Natural killer cell (primary cell): ENCODE measurements at regions of chr6 and their contacts with region 1.

Region 1: GRCh38 chr6:17156112-17156921 is 54.5 kb downstream of the STMND1 start:
- DNase-seq: peak; percentile 46 to 83
- ATAC-seq: peak in 2 of 3 donors; percentile 44 to 67
- H3K4me3 ChIP-seq: no peak overlapping the region
- H3K4me3 Mint-ChIP-seq: no peak overlapping the region
- H3K27ac ChIP-seq: no peak overlapping the region
- H3K27ac Mint-ChIP-seq: no peak overlapping the region
- H3K4me1 ChIP-seq: no peaks in the 10 kb centered on the region
- H3K4me1 Mint-ChIP-seq: no peaks in the 10 kb centered on the region
- H3K27me3 ChIP-seq: no peaks in the 10 kb centered on the region
- H3K27me3 Mint-ChIP-seq: peaks cover 4 to 18% of the 10 kb centered on the region in 2 donors
- CTCF ChIP-seq: peak; percentile 87

Region 2: DNA sequence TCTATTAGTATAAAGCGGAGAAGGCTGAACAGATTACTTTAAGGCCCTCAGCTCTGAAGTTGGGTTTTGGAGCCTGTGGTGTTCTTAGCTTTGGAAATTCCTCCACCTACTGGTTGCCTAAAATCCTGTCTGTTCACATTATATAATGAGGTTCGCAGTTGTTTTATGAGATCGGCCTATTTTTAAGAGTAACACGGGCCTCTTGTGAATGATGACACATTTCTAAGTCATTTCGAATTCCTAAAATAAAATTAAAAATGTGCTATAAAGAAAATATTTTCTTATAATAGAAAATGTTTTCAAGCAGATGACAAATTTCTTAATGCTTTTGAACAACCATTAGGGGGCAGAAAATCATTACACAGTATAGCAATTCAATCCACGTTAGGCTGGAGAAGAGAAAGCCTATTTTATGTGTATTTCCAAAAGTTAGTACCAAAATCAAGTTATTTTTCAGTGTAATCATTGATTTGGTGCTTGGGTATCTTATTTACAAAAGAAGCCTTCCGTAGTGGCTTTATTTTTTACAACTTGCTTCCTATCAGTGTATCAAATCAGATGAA is 428.0 kb after region 1 on chr6:
- intact Hi-C with region 1: loop called (anchors 2 kb)
- DNase-seq: peak in 1 of 2 donors; percentile 70
- ATAC-seq: peak; percentile 53 to 64 (median 58)
- H3K4me3 ChIP-seq: no peak overlapping the region
- H3K4me3 Mint-ChIP-seq: no peak overlapping the region
- H3K27ac ChIP-seq: no peak overlapping the region
- H3K27ac Mint-ChIP-seq: peak overlapping the region in 1 of 2 donors; percentile 14
- H3K4me1 ChIP-seq: peaks cover 15% of the 10 kb centered on the region
- H3K4me1 Mint-ChIP-seq: peaks cover 18 to 30% of the 10 kb centered on the region in 2 donors
- H3K27me3 ChIP-seq: peaks cover 2% of the 10 kb centered on the region
- H3K27me3 Mint-ChIP-seq: peaks cover 3 to 6% of the 10 kb centered on the region in 2 donors
- CTCF ChIP-seq: peak; percentile 80

Region 3: GRCh38 chr6:17803409-17803808 is 647.1 kb after region 1 on chr6:
- intact Hi-C with region 1: loop called (anchors 5 kb)
- DNase-seq: no peak
- ATAC-seq: no peak
- H3K4me3 ChIP-seq: no peak overlapping the region
- H3K4me3 Mint-ChIP-seq: no peak overlapping the region
- H3K27ac ChIP-seq: no peak overlapping the region
- H3K27ac Mint-ChIP-seq: no peak overlapping the region
- H3K4me1 ChIP-seq: no peaks in the 10 kb centered on the region
- H3K4me1 Mint-ChIP-seq: peaks cover 4 to 6% of the 10 kb centered on the region in 2 donors
- H3K27me3 ChIP-seq: no peaks in the 10 kb centered on the region
- H3K27me3 Mint-ChIP-seq: no peaks in the 10 kb centered on the region
- CTCF ChIP-seq: no peak

Region 4: GRCh38 chr6:17816921-17817611 is 660.7 kb after region 1 on chr6:
- intact Hi-C with region 1: loop called (anchors 5 kb)
- DNase-seq: no peak
- ATAC-seq: no peak
- H3K4me3 ChIP-seq: no peak overlapping the region
- H3K4me3 Mint-ChIP-seq: no peak overlapping the region
- H3K27ac ChIP-seq: no peak overlapping the region
- H3K27ac Mint-ChIP-seq: no peak overlapping the region
- H3K4me1 ChIP-seq: no peaks in the 10 kb centered on the region
- H3K4me1 Mint-ChIP-seq: no peaks in the 10 kb centered on the region
- H3K27me3 ChIP-seq: no peaks in the 10 kb centered on the region
- H3K27me3 Mint-ChIP-seq: no peaks in the 10 kb centered on the region
- CTCF ChIP-seq: no peak